ENCODE measurements at regions of chr13 and their contacts with region 1.

Region 1: DNA sequence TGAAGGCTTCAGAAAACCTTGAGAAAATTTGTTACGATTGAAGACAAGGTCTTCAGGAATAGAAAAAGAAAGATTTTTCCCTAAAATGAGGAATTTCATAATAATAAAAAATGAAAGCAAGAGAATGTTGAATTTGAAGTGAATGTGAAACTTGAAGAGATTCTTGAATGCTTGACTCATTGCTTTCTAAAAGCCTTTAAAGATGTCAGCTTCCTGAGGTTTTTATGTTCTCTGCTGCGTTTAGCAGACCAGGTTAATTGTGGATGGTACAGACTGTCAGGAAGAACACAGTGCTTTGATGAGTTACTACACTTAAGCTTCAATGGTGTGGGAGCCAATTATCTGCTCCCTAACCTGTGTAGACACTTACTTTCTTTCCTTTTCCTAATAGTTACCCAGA is 96.3 kb upstream of the FNDC3A start:
- DNase-seq: no peak
- H3K4me3 Mint-ChIP-seq: no peak overlapping the region
- H3K27ac Mint-ChIP-seq: no peak overlapping the region
- H3K4me1 Mint-ChIP-seq: peaks cover 42% of the 10 kb centered on the region
- H3K27me3 Mint-ChIP-seq: no peaks in the 10 kb centered on the region

Region 2: GRCh38 chr13:48804821-48805601 is 74.4 kb before region 1 on chr13:
- CTCF ChIA-PET with region 1: no interaction called
- POLR2A ChIA-PET with region 1: no interaction called
- intact Hi-C with region 1: loop called (anchors 1 kb)
- DNase-seq: peak; percentile 15
- H3K4me3 Mint-ChIP-seq: no peak overlapping the region
- H3K27ac Mint-ChIP-seq: peak overlapping the region; percentile 26
- H3K4me1 Mint-ChIP-seq: peaks cover 30% of the 10 kb centered on the region
- H3K27me3 Mint-ChIP-seq: no peaks in the 10 kb centered on the region

Region 3: GRCh38 chr13:48864100-48864499 is 15.3 kb before region 1 on chr13:
- CTCF ChIA-PET with region 1: no interaction called
- POLR2A ChIA-PET with region 1: no interaction called
- intact Hi-C with region 1: loop called (anchors 1 kb)
- DNase-seq: no peak
- H3K4me3 Mint-ChIP-seq: no peak overlapping the region
- H3K27ac Mint-ChIP-seq: no peak overlapping the region
- H3K4me1 Mint-ChIP-seq: peaks cover 6% of the 10 kb centered on the region
- H3K27me3 Mint-ChIP-seq: no peaks in the 10 kb centered on the region

Region 4: GRCh38 chr13:49140910-49141611 is 261.6 kb after region 1 on chr13:
- CTCF ChIA-PET with region 1: no interaction called
- POLR2A ChIA-PET with region 1: interaction called, 4 read pairs
- intact Hi-C with region 1: loop called (anchors 5 kb)
- DNase-seq: no peak
- H3K4me3 Mint-ChIP-seq: no peak overlapping the region
- H3K27ac Mint-ChIP-seq: peak overlapping the region; percentile 62
- H3K4me1 Mint-ChIP-seq: peaks cover 24% of the 10 kb centered on the region
- H3K27me3 Mint-ChIP-seq: no peaks in the 10 kb centered on the region